ENCODE measurements at regions of chr15 and their contacts with region 1.

Region 1: DNA sequence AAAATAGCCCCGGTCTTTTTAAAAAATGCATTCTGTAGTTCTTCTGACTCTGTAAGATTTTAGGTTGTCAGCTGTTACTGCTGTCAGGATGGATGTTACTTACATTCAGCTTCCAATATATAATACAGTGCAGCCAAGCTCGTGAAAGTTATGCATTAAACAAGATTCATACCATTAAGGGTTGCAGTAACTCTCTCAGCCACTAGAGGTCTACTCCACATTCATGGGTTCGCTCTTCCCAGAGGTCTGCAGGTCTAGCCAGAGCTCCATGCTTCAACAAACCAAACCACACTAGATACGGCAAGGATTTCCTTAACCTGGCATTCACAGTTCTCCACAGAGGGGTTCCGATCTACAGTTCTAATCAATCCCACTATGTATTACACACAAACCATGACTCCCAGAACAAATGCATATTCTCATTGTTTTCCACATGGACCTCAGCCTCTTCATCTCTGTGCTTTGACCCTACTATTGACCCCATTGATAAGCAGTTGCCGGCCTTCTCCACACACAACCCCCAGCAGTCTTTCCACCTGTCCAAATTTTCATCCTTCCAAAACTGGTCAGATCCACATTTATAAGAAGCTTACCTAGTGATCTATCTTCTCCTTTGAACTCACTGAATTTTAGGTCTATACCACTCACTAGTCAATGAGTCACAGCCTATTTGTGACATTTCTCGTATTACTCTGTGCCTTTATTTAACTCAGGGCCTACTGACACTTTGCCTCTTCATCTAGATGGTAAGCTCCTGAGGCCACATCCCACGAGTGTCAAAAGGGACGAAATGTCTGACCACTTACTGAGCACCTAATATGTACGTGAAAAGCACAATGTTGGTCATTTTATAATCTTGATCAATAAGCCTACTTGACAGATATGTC is 33.7 kb downstream of the RORA start:
- DNase-seq: no peak
- ATAC-seq: no peak
- H3K4me3 Mint-ChIP-seq: no peak overlapping the region
- H3K27ac Mint-ChIP-seq: no peak overlapping the region
- H3K4me1 Mint-ChIP-seq: no peaks in the 10 kb centered on the region
- H3K27me3 Mint-ChIP-seq: peaks cover 30% of the 10 kb centered on the region

Region 2: DNA sequence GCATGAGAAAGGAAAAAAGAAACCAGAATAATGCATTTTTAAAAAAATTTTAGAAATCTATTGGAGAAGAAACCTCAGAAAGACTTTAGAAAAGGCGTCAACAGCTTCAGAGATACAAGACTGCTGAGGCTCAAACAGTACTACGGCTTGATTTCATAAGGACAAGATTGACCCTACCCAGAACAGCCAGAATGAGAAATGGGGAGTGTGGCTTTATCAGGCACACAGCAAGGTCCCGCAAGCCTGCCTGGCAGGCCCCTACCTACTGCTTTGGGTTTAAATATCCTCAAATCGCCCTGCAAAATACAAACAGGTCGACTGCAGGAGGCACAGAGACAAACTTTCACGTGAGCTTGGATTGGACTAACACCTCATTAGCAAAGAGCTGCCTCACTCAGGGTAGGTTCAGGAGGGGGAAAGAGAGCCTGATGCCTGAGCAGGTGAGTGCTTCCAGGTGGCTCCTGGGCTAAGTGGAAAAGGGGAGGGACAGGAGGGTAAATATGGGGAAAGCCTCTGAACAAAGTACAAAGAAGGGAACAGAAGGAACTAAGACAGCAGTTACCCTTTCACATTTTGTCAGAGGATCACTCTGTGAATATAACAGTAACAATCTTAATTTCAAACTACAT is 53.7 kb before region 1 on chr15:
- CTCF ChIA-PET with region 1: no interaction called
- DNase-seq: no peak
- ATAC-seq: no peak
- H3K4me3 Mint-ChIP-seq: no peak overlapping the region
- H3K27ac Mint-ChIP-seq: no peak overlapping the region
- H3K4me1 Mint-ChIP-seq: peaks cover 5% of the 10 kb centered on the region
- H3K27me3 Mint-ChIP-seq: peaks cover 68% of the 10 kb centered on the region

Region 3: GRCh38 chr15:61169904-61170695 is 25.3 kb before region 1 on chr15:
- CTCF ChIA-PET with region 1: interaction called, 28 read pairs
- DNase-seq: peak; percentile 76
- ATAC-seq: peak; percentile 92
- H3K4me3 Mint-ChIP-seq: peak overlapping the region; percentile 2
- H3K27ac Mint-ChIP-seq: peak overlapping the region; percentile 84
- H3K4me1 Mint-ChIP-seq: peaks cover 24% of the 10 kb centered on the region
- H3K27me3 Mint-ChIP-seq: peaks cover 25% of the 10 kb centered on the region

Region 4: DNA sequence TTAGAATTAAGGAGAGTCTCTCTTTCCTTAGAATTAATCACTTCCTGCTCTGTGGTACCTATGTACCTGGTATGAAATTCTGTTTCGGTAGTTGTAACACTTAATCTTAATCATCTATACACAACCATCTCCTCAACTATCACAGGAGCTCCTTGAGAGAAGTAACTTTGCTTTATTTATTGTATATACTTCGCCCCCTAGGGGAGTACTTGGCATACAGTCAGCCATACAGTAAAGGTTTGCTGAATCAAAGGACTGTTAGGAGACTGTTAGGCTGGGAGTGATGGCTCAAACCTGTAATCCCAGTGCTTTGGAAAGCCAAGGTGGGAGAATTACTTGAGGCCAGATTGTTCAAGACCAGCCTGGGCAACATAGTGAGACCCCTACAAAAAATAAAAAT is 10.9 kb before region 1 on chr15:
- CTCF ChIA-PET with region 1: interaction called, 10 read pairs
- DNase-seq: no peak
- ATAC-seq: no peak
- H3K4me3 Mint-ChIP-seq: no peak overlapping the region
- H3K27ac Mint-ChIP-seq: no peak overlapping the region
- H3K4me1 Mint-ChIP-seq: no peaks in the 10 kb centered on the region
- H3K27me3 Mint-ChIP-seq: peaks cover 49% of the 10 kb centered on the region

Measured in activated CD8-positive, alpha-beta memory T cell treated with anti-CD3 and anti-CD28 coated beads, Interleukin-2, amount 10 ng/mL, durations not matched to agents 7 days and 5 days (primary cell).